CD4-positive, alpha-beta T cell (primary cell): ENCODE measurements at regions of chr3 and their contacts with region 1.

Region 1: GRCh38 chr3:15332405-15333098 is at the start of gene SH3BP5:
- DNase-seq: peak; percentile 45 to 90 (median 70)
- ATAC-seq: peak; percentile 90
- H3K4me3 ChIP-seq: peak within 1 kb of the TSS; percentile 99
- H3K4me3 Mint-ChIP-seq: peak within 1 kb of the TSS; percentile 97
- H3K27ac ChIP-seq: peak within 1 kb of the TSS; percentile 45 to 60
- H3K27ac Mint-ChIP-seq: peak within 1 kb of the TSS; percentile 79
- H3K4me1 ChIP-seq: peaks cover 48% of the 10 kb centered on the region
- H3K4me1 Mint-ChIP-seq: peaks cover 58% of the 10 kb centered on the region
- H3K27me3 ChIP-seq: no peaks in the 10 kb centered on the region
- H3K27me3 Mint-ChIP-seq: no peaks in the 10 kb centered on the region
- CTCF ChIP-seq: peak; percentile 68
- total RNA-seq, gene SH3BP5: 16.8 to 17.7 TPM

Region 2: GRCh38 chr3:15291589-15292541 is 40.7 kb before region 1 on chr3:
- CTCF ChIA-PET with region 1: interaction called, 9 read pairs
- POLR2A ChIA-PET with region 1: interaction called, 13 read pairs
- intact Hi-C with region 1: no loop called
- DNase-seq: peak; percentile 24 to 90 (median 54)
- ATAC-seq: peak; percentile 90
- H3K4me3 ChIP-seq: peak overlapping the region; percentile 17
- H3K4me3 Mint-ChIP-seq: peak overlapping the region; percentile 81
- H3K27ac ChIP-seq: peak overlapping the region; percentile 46 to 71
- H3K27ac Mint-ChIP-seq: peak overlapping the region; percentile 94
- H3K4me1 ChIP-seq: peaks cover 89% of the 10 kb centered on the region
- H3K4me1 Mint-ChIP-seq: peaks cover 96% of the 10 kb centered on the region
- H3K27me3 ChIP-seq: no peaks in the 10 kb centered on the region
- H3K27me3 Mint-ChIP-seq: no peaks in the 10 kb centered on the region
- CTCF ChIP-seq: no peak

Region 3: GRCh38 chr3:15309662-15310335 is 22.8 kb before region 1 on chr3:
- CTCF ChIA-PET with region 1: interaction called, 17 read pairs
- POLR2A ChIA-PET with region 1: interaction called, 5 read pairs
- intact Hi-C with region 1: no loop called
- DNase-seq: no peak
- ATAC-seq: no peak
- H3K4me3 ChIP-seq: no peak overlapping the region
- H3K4me3 Mint-ChIP-seq: peak overlapping the region; percentile 26
- H3K27ac ChIP-seq: no peak overlapping the region
- H3K27ac Mint-ChIP-seq: peak overlapping the region; percentile 84
- H3K4me1 ChIP-seq: peaks cover 76% of the 10 kb centered on the region
- H3K4me1 Mint-ChIP-seq: peaks cover 67% of the 10 kb centered on the region
- H3K27me3 ChIP-seq: no peaks in the 10 kb centered on the region
- H3K27me3 Mint-ChIP-seq: no peaks in the 10 kb centered on the region
- CTCF ChIP-seq: no peak

Region 4: GRCh38 chr3:15319575-15319974 is 13.0 kb before region 1 on chr3:
- CTCF ChIA-PET with region 1: interaction called, 16 read pairs
- POLR2A ChIA-PET with region 1: interaction called, 19 read pairs
- intact Hi-C with region 1: no loop called
- DNase-seq: no peak
- ATAC-seq: no peak
- H3K4me3 ChIP-seq: no peak overlapping the region
- H3K4me3 Mint-ChIP-seq: peak overlapping the region; percentile 43
- H3K27ac ChIP-seq: no peak overlapping the region
- H3K27ac Mint-ChIP-seq: peak overlapping the region; percentile 77
- H3K4me1 ChIP-seq: peaks cover 73% of the 10 kb centered on the region
- H3K4me1 Mint-ChIP-seq: peaks cover 75% of the 10 kb centered on the region
- H3K27me3 ChIP-seq: no peaks in the 10 kb centered on the region
- H3K27me3 Mint-ChIP-seq: no peaks in the 10 kb centered on the region
- CTCF ChIP-seq: no peak

Region 5: DNA sequence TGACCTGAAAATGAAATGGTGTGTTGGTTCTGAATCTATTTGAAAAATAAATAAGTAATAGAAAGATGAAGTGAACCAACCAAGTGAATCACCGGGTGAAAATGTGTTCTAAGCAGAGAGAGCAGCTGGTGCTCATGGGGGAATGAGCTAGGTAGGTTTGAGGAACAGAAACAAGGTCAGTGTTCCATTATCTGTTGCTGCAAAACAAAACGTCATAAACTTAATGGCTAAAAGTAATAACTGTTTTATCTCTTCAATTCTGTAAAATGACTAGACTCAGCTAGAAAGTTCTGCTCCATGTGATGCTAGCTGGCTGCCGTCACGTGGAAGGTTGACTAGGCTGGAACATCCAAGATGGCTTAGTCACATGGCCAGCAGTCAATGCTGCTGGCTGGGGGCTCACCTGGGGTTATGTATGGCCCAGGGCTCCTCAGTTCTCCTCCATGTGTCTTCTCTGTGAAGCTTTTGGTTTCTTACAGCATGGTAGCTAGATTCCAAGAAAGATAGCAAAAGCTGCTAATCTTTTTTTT is 13.1 kb after region 1 on chr3:
- CTCF ChIA-PET with region 1: interaction called, 17 read pairs
- POLR2A ChIA-PET with region 1: interaction called, 12 read pairs
- intact Hi-C with region 1: no loop called
- DNase-seq: peak in 2 of 14 experiments; percentile 31 to 46
- ATAC-seq: no peak
- H3K4me3 ChIP-seq: no peak overlapping the region
- H3K4me3 Mint-ChIP-seq: peak overlapping the region; percentile 3
- H3K27ac ChIP-seq: no peak overlapping the region
- H3K27ac Mint-ChIP-seq: no peak overlapping the region
- H3K4me1 ChIP-seq: peaks cover 55% of the 10 kb centered on the region
- H3K4me1 Mint-ChIP-seq: peaks cover 73% of the 10 kb centered on the region
- H3K27me3 ChIP-seq: no peaks in the 10 kb centered on the region
- H3K27me3 Mint-ChIP-seq: no peaks in the 10 kb centered on the region
- CTCF ChIP-seq: no peak

Region 6: DNA sequence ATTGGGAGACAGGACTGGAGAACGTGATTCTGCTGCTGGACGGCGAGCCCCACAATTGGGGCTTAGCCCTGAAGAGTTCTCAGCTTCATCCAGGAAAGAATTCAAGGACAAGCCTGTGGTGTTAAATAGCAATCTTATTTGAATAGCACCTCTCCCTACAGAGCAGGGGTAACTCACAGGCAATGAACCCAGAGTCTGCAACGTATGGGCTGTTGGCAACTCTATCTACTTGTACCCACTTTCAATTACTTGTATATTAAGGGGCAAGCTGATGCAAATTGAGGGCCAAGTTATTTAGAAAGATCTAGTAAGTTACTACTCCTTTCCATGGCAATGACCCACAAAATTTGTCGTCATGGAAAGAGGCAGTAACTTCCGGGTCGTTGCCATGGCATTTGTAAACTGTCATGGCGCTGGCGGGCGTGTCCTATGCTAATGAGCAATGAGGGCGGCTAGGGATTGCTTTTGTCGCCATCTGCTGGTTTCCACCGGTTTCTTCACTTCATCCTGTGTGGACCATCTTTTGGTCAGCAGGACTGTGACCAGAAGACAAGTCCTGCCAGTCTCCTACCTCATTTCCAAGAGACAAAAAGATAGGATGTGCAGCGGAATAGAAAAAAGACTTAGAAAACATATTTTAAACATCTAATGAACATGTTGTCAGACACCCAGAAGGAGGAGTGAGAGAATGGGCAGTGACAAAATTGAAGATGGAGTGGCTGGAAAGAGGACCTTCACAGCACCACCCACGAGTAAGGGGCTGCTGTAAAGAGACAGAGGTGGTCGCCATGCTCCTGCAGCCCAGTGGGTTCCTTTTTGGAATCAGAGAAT is 45.6 kb after region 1 on chr3:
- CTCF ChIA-PET with region 1: interaction called, 16 read pairs
- POLR2A ChIA-PET with region 1: no interaction called
- intact Hi-C with region 1: loop called (anchors 1 to 2 kb)
- DNase-seq: peak; percentile 87 to 98 (median 92)
- ATAC-seq: peak; percentile 95
- H3K4me3 ChIP-seq: no peak overlapping the region
- H3K4me3 Mint-ChIP-seq: peak overlapping the region; percentile 2
- H3K27ac ChIP-seq: peak overlapping the region; percentile 79 to 94
- H3K27ac Mint-ChIP-seq: peak overlapping the region; percentile 91
- H3K4me1 ChIP-seq: peaks cover 8% of the 10 kb centered on the region
- H3K4me1 Mint-ChIP-seq: peaks cover 10% of the 10 kb centered on the region
- H3K27me3 ChIP-seq: no peaks in the 10 kb centered on the region
- H3K27me3 Mint-ChIP-seq: no peaks in the 10 kb centered on the region
- CTCF ChIP-seq: peak; percentile 82